ENCODE measurements at regions of chr6 and their contacts with region 1.

Region 1: GRCh38 chr6:138817822-138818308 is 22.0 kb downstream of the ECT2L start:
- DNase-seq: no peak
- ATAC-seq: peak; percentile 51
- H3K4me3 ChIP-seq: no peak overlapping the region
- H3K27ac ChIP-seq: no peak overlapping the region; the same call in 1 of the 2 replicates
- H3K4me1 ChIP-seq: peaks cover 18% of the 10 kb centered on the region
- H3K27me3 ChIP-seq: no peaks in the 10 kb centered on the region
- CTCF ChIP-seq: no peak
- EP300 ChIP-seq: no peak
- POLR2A ChIP-seq: no peak
- RAD21 ChIP-seq: no peak

Region 2: DNA sequence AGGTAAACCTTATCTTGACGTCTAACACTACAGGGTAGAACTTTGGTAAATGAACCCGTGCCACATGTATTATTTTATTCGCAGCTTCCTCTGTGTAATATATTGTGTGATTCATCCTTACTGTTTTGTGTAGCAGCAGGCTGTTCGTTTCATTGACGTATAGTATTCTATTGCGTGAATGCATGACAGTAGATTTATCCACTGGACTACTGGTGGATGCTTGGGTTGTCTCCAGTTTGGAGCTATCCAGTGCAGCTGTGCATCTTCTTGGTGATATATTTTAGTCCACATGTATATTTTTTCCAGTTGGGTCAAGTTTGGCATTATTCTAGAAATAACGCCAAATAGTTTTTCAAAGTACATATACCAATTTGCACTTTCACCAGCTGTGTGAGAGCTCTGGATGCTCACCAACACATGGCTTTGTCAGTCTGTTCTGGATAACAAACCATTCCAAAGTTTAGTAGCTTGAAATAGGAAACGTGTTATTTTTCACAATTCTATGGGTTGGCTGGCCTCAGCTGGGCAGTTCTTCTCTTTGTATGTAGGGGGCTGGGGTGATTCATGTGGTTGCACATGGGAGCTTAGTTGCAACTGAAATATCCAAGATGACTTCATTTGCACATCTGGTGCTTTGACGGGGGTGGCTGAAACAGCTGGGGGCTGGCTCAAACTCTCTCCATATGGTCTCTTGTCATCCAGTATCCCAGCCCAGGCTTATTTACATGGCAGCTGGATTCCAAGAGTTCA is 12.7 kb before region 1 on chr6:
- CTCF ChIA-PET with region 1: interaction called, 14 read pairs
- POLR2A ChIA-PET with region 1: interaction called, 6 read pairs
- RAD21 ChIA-PET with region 1: interaction called, 4 read pairs
- SMC1A ChIA-PET with region 1: interaction called, 6 read pairs
- in situ Hi-C with region 1: no loop called
- intact Hi-C with region 1: no loop called
- DNase-seq: no peak
- ATAC-seq: no peak
- H3K4me3 ChIP-seq: no peak overlapping the region
- H3K27ac ChIP-seq: no peak overlapping the region
- H3K4me1 ChIP-seq: no peaks in the 10 kb centered on the region
- H3K27me3 ChIP-seq: no peaks in the 10 kb centered on the region; a peak in 1 of 4 replicates
- CTCF ChIP-seq: no peak
- EP300 ChIP-seq: no peak
- POLR2A ChIP-seq: no peak
- RAD21 ChIP-seq: no peak

Region 3: GRCh38 chr6:138830248-138830647 is 12.4 kb after region 1 on chr6:
- CTCF ChIA-PET with region 1: no interaction called
- POLR2A ChIA-PET with region 1: no interaction called
- RAD21 ChIA-PET with region 1: no interaction called
- SMC1A ChIA-PET with region 1: no interaction called
- in situ Hi-C with region 1: no loop called
- intact Hi-C with region 1: no loop called
- DNase-seq: no peak
- ATAC-seq: no peak
- H3K4me3 ChIP-seq: no peak overlapping the region
- H3K27ac ChIP-seq: no peak overlapping the region
- H3K4me1 ChIP-seq: no peaks in the 10 kb centered on the region
- H3K27me3 ChIP-seq: no peaks in the 10 kb centered on the region
- CTCF ChIP-seq: no peak
- EP300 ChIP-seq: no peak
- POLR2A ChIP-seq: no peak
- RAD21 ChIP-seq: no peak

Region 4: DNA sequence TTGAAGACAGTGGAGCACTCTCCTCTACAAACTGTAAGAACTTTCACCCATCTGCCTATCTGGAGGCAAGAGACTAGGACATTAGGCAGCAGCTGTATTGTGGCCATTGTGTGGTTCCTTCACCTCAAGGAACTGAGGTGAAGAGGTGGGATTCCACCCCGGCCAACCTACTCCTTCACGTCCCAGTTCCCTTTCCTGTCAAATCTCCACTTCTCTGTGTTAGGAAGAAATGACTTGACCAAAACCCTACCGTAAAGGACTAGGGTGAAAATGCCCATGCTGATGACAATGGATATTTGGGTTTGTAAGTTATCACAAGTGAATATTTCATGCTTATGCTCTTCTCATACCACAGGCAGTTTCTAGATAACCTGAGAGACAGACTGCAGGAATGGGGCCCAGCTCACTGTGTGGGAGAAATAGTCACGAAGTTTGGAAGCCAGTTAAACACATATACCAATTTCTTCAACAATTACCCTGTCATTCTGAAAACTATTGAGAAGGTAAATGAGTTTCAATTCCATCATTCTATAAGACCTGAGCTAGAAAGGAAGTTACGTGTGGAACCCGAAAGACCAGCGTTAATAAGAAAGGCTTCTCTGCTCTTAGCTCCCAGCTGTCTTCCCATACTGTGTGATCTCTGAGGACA is 64.6 kb after region 1 on chr6:
- CTCF ChIA-PET with region 1: interaction called, 4 read pairs
- POLR2A ChIA-PET with region 1: no interaction called
- RAD21 ChIA-PET with region 1: interaction called, 9 read pairs
- SMC1A ChIA-PET with region 1: interaction called, 12 read pairs
- in situ Hi-C with region 1: no loop called
- intact Hi-C with region 1: loop called (anchors 1 kb)
- DNase-seq: peak; percentile 74
- ATAC-seq: peak; percentile 91
- H3K4me3 ChIP-seq: peak overlapping the region; percentile 36; the same call in 1 of the 2 replicates
- H3K27ac ChIP-seq: peak overlapping the region; percentile 95
- H3K4me1 ChIP-seq: peaks cover 22% of the 10 kb centered on the region
- H3K27me3 ChIP-seq: no peaks in the 10 kb centered on the region
- CTCF ChIP-seq: no peak
- EP300 ChIP-seq: peak; percentile 79 to 87
- POLR2A ChIP-seq: no peak
- RAD21 ChIP-seq: no peak

Region 5: DNA sequence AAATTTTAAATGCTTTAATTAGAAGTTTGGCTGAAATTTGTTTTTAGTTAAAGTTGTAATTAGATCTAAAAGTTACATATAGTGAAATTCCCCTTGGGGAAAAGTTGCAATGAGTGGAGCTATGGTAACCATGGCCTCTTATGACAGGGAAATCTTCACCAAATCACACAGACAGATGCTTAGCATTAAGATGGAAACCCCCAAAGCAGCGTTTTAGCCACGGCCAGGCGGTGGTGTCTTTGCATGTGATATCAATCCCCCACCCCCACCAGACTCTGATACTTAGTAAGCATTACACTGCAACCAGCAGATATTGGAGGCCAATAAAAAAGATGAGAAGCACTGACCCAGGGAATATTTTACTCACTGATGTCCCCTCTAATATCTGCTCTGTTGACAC is 94.4 kb after region 1 on chr6:
- CTCF ChIA-PET with region 1: interaction called, 4 read pairs
- POLR2A ChIA-PET with region 1: no interaction called
- RAD21 ChIA-PET with region 1: interaction called, 9 read pairs
- SMC1A ChIA-PET with region 1: interaction called, 17 read pairs
- in situ Hi-C with region 1: no loop called
- intact Hi-C with region 1: loop called (anchors 1 kb)
- DNase-seq: no peak
- ATAC-seq: peak; percentile 65
- H3K4me3 ChIP-seq: no peak overlapping the region
- H3K27ac ChIP-seq: no peak overlapping the region
- H3K4me1 ChIP-seq: no peaks in the 10 kb centered on the region
- H3K27me3 ChIP-seq: no peaks in the 10 kb centered on the region
- CTCF ChIP-seq: peak in 1 of 3 experiments; percentile 18; a peak in 2 of 6 replicates
- EP300 ChIP-seq: 0 out of 4 replicates have a peak, but pooled peaks of 1 of the 2 experiments have one; percentile 15
- POLR2A ChIP-seq: no peak
- RAD21 ChIP-seq: no peak; the same call in 1 of the 2 replicates

Region 6: DNA sequence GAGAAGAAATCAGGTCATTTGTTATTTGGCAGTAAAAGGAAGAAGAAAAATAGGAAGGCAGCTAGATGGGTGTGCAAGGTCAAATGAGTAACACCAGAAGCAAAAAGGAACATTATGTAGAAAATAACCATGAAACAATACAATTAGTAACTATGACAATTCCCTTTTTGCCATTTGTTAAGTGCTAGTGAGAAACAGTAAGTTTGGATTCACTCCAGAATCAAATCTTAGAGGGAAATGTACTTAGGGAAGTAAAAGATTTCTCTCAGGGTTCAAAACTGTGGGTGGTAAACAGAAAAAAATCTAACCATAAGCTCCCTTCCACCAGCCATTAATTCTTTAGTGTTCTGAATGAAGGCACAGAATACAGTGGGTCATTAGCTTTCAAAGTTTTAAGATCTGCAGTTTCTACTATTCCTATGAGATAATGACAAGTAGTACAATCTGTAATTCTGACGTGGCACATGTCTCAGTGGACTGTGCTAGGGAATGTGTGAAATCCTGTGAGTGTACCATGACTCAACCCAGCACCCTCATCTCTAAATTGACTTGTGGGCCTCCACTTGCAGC is 153.1 kb after region 1 on chr6:
- CTCF ChIA-PET with region 1: interaction called, 17 read pairs
- POLR2A ChIA-PET with region 1: interaction called, 7 read pairs
- RAD21 ChIA-PET with region 1: interaction called, 5 read pairs
- SMC1A ChIA-PET with region 1: interaction called, 5 read pairs
- in situ Hi-C with region 1: no loop called
- intact Hi-C with region 1: no loop called
- DNase-seq: no peak
- ATAC-seq: peak; percentile 80
- H3K4me3 ChIP-seq: no peak overlapping the region
- H3K27ac ChIP-seq: no peak overlapping the region
- H3K4me1 ChIP-seq: peaks cover 16% of the 10 kb centered on the region
- H3K27me3 ChIP-seq: no peaks in the 10 kb centered on the region
- CTCF ChIP-seq: no peak
- EP300 ChIP-seq: no peak
- POLR2A ChIP-seq: no peak
- RAD21 ChIP-seq: no peak

Region 7: DNA sequence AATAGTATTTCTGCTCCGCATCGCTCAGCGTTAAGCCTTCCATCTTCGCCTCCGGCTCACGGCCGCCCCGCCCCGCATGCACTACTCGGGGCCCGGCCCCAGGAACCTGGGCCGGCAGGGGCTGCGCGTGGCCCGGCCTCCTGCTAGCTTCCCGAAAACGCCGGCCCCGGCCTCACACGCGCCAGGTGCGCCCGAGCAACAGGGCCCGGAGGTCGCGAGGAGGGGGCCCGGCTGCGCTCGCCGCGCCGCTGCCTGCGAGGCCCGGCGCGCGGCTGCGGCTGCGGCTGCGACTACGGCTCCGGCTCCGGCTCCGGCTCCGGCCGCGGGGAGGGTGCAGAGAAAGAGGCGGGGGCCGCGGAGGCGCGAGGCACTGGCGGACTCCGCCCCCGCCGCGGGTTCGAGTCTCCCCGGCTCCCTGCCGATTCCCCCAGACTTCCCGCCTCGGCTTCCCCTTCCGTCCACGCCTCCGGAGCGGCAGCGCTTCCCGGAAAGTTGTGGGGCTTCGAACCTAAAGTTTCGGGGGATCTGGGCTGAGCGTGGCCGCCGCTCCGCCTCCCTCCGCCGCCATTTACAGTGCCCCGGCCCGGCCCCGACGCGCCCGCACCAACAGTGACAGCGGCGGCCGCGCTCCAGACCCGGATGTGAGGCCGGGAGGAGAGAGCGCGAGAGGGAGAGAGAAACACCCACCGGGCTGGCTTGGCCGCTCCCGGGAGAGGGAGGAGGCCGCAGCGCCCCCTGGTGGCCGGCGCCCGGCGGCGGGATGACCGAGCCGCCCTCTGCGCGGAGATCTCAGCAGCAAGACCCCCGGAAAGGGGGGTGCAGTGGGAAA is 170.0 kb after region 1 on chr6 and contains the start of gene REPS1:
- CTCF ChIA-PET with region 1: interaction called, 166 read pairs
- POLR2A ChIA-PET with region 1: interaction called, 3 read pairs
- RAD21 ChIA-PET with region 1: interaction called, 94 read pairs
- SMC1A ChIA-PET with region 1: interaction called, 163 read pairs
- in situ Hi-C with region 1: loop called (anchors 5 kb)
- intact Hi-C with region 1: loop called (anchors 1 kb)
- DNase-seq: peak; percentile 40
- ATAC-seq: peak; percentile 87
- H3K4me3 ChIP-seq: peak within 1 kb of the TSS; percentile 96
- H3K27ac ChIP-seq: peak within 1 kb of the TSS; percentile 86
- H3K4me1 ChIP-seq: no peaks in the 10 kb centered on the region
- H3K27me3 ChIP-seq: no peaks in the 10 kb centered on the region
- CTCF ChIP-seq: peak; percentile 83 to 93 (median 90)
- EP300 ChIP-seq: no peak
- POLR2A ChIP-seq: peak; percentile 96
- RAD21 ChIP-seq: peak; percentile 68
- polyA plus RNA-seq, gene REPS1: 13.7 to 21.2 TPM

Region 8: DNA sequence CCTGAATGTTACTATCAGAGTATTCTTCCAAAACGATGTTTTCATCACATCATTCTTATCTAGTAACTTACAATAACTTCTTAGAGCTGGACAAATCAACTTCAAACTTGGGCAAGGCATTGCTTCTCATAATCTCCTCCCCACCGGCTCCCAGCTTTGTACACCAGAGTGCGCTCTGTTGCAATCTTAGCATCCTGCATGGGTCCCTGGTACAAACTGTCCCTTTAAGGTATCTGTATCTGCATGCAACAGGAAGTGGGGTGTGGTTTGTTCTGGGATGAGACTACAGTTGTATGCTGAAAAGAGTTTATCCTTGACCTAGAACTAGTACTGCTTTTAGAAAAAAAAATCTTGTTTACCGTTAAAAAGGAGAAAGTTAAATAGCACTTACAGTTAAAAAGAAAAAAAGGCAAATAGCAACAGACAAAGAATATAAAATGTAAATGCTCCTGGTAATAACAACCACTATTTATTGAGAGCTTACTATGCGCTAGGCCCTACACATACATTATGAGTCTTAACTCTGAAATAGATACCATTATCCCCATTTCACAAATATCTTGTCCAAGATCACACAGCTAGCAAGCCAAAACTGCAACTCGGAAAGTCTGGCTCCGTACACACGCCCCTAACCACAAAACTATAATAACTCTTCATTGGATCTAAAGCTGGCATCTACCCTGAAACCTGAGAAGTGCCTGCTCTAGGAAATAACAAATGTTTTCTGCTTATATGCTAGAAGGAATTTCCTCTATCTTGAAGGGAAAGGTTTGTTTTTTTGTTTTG is 307.2 kb after region 1 on chr6:
- CTCF ChIA-PET with region 1: interaction called, 7 read pairs
- POLR2A ChIA-PET with region 1: no interaction called
- RAD21 ChIA-PET with region 1: interaction called, 3 read pairs
- SMC1A ChIA-PET with region 1: interaction called, 11 read pairs
- in situ Hi-C with region 1: no loop called
- intact Hi-C with region 1: no loop called
- DNase-seq: peak; percentile 54
- ATAC-seq: peak; percentile 100
- H3K4me3 ChIP-seq: no peak overlapping the region
- H3K27ac ChIP-seq: no peak overlapping the region
- H3K4me1 ChIP-seq: peaks cover 4% of the 10 kb centered on the region; the same call in 1 of the 2 replicates
- H3K27me3 ChIP-seq: no peaks in the 10 kb centered on the region
- CTCF ChIP-seq: peak; percentile 51 to 75 (median 66); a peak in 5 of 6 replicates
- EP300 ChIP-seq: 0 out of 4 replicates have a peak, but pooled peaks of 1 of the 2 experiments have one; percentile 41
- POLR2A ChIP-seq: no peak
- RAD21 ChIP-seq: peak; percentile 78

Measured in GM12878 (cell line).